Posterior vena cava (tissue), 2 donors: ENCODE measurements at regions of chr6 and their contacts with region 1.

Region 1: GRCh38 chr6:34004706-34005105 is 141.2 kb downstream of the GRM4 start:
- DNase-seq: peak; percentile 26

Region 2: GRCh38 chr6:33983105-33983716 is 21.5 kb before region 1 on chr6:
- intact Hi-C with region 1: no loop called
- DNase-seq: peak; percentile 81

Region 3: DNA sequence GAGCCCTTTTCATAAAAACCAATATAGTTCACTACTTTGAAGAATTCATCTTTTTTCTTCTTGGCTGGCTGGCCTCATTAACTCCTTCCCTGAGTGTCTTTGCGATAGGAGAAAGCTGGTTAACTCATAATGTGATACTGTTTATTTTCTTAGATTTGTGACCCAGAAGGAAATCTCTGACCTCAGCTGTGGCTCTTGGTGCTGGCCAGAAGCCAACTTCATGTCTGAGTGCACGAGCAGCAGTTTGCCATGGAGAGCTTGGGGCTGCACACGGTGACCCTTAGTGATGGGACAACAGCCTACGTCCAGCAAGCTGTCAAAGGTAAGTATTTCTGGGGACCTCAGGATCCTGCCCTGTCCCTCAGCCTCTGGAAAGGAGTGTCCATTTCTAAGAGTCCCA is 1276.2 kb after region 1 on chr6:
- intact Hi-C with region 1: loop called in 1 of 2 experiments (anchors 5 kb)
- DNase-seq: no peak